Spleen (tissue), 13 donors: ENCODE measurements at regions of chr9 and their contacts with region 1.

Region 1: DNA sequence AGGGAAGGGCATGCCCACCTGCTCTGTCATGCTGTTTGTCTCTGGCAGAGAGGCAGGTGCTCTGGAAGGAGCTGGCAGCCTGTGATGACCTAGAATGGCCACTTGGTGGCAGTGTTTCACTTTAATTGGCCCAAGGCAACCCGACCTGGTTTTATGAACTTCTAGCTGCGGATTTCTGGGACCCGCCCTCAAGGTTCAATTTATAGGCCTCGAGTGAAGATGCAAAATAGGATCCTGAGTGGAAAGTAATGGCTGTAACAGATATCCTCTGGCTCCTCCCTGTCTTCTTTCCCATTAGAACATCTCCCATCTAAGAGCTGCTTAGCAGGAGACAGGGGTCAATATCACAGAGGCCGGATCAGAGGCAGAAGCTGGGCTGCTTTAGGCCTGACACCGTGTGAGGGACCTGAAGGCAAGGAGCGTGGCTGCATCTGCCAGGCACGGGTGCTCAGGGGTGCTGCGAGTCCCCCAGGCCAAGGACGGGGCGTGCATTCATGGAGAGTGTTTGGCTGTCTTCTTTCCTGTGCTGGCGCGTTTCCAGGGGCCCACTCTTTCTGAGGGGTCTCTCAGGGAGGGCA is 56.7 kb upstream of the SLC28A3 start:
- DNase-seq: peak; percentile 82
- H3K4me3 ChIP-seq: no peak overlapping the region
- H3K27ac ChIP-seq: no peak overlapping the region
- H3K4me1 ChIP-seq: peaks cover 0 to 8% (median 0%) of the 10 kb centered on the region in 6 donors
- H3K27me3 ChIP-seq: peaks cover 0 to 31% (median 0%) of the 10 kb centered on the region in 7 donors
- CTCF ChIP-seq: peak; percentile 70 to 97 (median 94)
- POLR2A ChIP-seq: no peak

Region 2: DNA sequence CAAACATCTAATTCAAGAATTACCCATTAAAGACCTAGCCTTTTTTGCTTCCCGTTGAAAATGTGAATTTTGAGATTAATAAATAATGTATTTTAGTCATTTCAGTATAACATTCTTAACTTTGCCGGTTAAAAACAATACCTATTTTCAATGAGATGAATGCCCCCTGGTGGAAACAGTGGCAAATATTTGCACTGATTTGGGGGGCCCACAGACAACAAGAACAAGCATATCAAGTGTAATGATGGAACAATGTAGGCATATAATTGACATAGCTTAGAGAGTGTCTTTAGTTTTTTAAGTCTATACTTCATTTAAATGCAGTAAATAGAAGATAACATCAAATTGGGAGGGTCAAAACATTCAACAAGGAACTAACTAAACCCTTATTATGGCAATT is 384.2 kb after region 1 on chr9:
- intact Hi-C with region 1: loop called (anchors 5 kb)
- DNase-seq: no peak
- H3K4me3 ChIP-seq: no peak overlapping the region
- H3K27ac ChIP-seq: no peak overlapping the region
- H3K4me1 ChIP-seq: no peaks in the 10 kb centered on the region
- H3K27me3 ChIP-seq: peaks cover 0 to 5% (median 0%) of the 10 kb centered on the region in 7 donors
- CTCF ChIP-seq: peak in 7 of 11 experiments; percentile 19 to 49 (median 34)
- POLR2A ChIP-seq: no peak

Region 3: GRCh38 chr9:84953797-84954705 is 556.8 kb after region 1 on chr9:
- intact Hi-C with region 1: loop called (anchors 10 kb)
- DNase-seq: peak; percentile 77
- H3K4me3 ChIP-seq: no peak overlapping the region
- H3K27ac ChIP-seq: no peak overlapping the region
- H3K4me1 ChIP-seq: peaks cover 0 to 3% (median 0%) of the 10 kb centered on the region in 6 donors
- H3K27me3 ChIP-seq: peaks cover 0 to 12% (median 0%) of the 10 kb centered on the region in 7 donors
- CTCF ChIP-seq: peak; percentile 36 to 86 (median 75)
- POLR2A ChIP-seq: no peak

Region 4: GRCh38 chr9:85605905-85606304 is 1208.7 kb after region 1 on chr9:
- intact Hi-C with region 1: loop called (anchors 5 kb)
- DNase-seq: no peak
- H3K4me3 ChIP-seq: no peak overlapping the region
- H3K27ac ChIP-seq: no peak overlapping the region
- H3K4me1 ChIP-seq: peaks cover 0 to 28% (median 13%) of the 10 kb centered on the region in 6 donors
- H3K27me3 ChIP-seq: no peaks in the 10 kb centered on the region
- CTCF ChIP-seq: no peak
- POLR2A ChIP-seq: no peak